ENCODE measurements at regions of chr1 and their contacts with region 1.

Region 1: DNA sequence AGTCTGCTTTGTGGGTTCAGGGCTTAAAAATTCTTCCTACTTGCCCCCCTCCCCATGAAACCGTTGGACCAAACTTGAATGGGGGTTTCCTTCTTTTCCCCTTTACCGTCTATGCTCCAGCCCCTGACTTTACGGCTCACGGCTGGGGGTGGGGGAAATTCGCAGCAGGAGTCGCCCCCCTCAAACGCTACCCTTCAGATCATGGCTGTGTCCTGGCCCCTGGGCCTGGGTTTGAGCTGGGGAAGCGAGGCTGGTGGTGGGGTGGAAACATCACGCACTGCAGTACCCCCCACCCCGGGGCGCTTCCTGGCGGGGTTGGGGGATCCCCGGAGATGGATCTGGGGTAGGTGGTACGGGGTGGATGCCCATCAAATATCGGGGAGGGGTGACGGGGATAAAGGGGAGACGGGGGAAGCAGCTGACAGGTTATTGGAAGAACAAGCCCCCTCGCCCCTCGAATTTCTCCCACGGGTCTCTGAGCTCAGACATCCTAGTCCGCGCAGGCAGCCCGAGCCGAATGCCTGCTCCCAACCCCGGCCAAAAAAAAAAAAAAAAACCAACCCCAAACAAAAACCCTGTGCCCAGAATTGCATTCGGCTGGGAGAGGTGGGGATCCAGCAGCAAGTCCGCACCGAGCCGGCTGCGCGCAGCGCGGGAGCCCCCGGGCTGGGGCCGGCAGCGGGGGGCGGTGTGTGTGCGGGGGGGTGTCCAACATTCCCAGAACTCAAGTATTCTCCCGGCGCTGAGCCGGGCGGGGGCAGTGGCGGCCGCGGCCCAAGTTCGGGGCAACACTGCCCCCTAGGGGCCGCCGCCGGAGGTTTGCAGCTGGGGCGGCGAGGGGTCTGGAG is 59.0 kb upstream of the ACOT11 start:
- DNase-seq: peak; percentile 68 to 91
- ATAC-seq: peak; percentile 79 to 92
- H3K4me3 ChIP-seq: peak overlapping the region; percentile 61
- H3K27ac ChIP-seq: peak overlapping the region; percentile 84 to 99
- H3K4me1 ChIP-seq: peaks cover 10% of the 10 kb centered on the region
- CTCF ChIP-seq: peak; percentile 88
- EP300 ChIP-seq: no peak
- POLR2A ChIP-seq: no peak
- RAD21 ChIP-seq: peak; percentile 75 to 96

Region 2: GRCh38 chr1:54070171-54070837 is 418.7 kb before region 1 on chr1:
- CTCF ChIA-PET with region 1: interaction called, 26 read pairs
- POLR2A ChIA-PET with region 1: no interaction called
- DNase-seq: peak; percentile 45 to 65
- ATAC-seq: peak; percentile 64 to 89; a peak in 4 of 6 replicates
- H3K4me3 ChIP-seq: no peak overlapping the region
- H3K27ac ChIP-seq: no peak overlapping the region
- H3K4me1 ChIP-seq: no peaks in the 10 kb centered on the region
- CTCF ChIP-seq: peak; percentile 90
- EP300 ChIP-seq: no peak
- POLR2A ChIP-seq: no peak
- RAD21 ChIP-seq: peak; percentile 81 to 84

Region 3: GRCh38 chr1:54114955-54115354 is 374.0 kb before region 1 on chr1:
- CTCF ChIA-PET with region 1: interaction called, 14 read pairs
- POLR2A ChIA-PET with region 1: no interaction called
- DNase-seq: no peak
- ATAC-seq: no peak
- H3K4me3 ChIP-seq: no peak overlapping the region
- H3K27ac ChIP-seq: no peak overlapping the region
- H3K4me1 ChIP-seq: peaks cover 19% of the 10 kb centered on the region
- CTCF ChIP-seq: no peak
- EP300 ChIP-seq: no peak
- POLR2A ChIP-seq: no peak
- RAD21 ChIP-seq: no peak

Region 4: GRCh38 chr1:54121482-54122134 is 367.4 kb before region 1 on chr1:
- CTCF ChIA-PET with region 1: interaction called, 36 read pairs
- POLR2A ChIA-PET with region 1: interaction called, 3 read pairs
- DNase-seq: peak; percentile 64 to 84
- ATAC-seq: peak; percentile 81 to 95
- H3K4me3 ChIP-seq: 0 out of 3 replicates have a peak overlapping the region, but pooled peaks have one; percentile 31
- H3K27ac ChIP-seq: peak overlapping the region; percentile 79 to 85
- H3K4me1 ChIP-seq: peaks cover 26% of the 10 kb centered on the region
- CTCF ChIP-seq: peak; percentile 62
- EP300 ChIP-seq: no peak
- POLR2A ChIP-seq: no peak
- RAD21 ChIP-seq: peak; percentile 64 to 75

Region 5: GRCh38 chr1:54139711-54140110 is 349.3 kb before region 1 on chr1:
- CTCF ChIA-PET with region 1: interaction called, 10 read pairs
- POLR2A ChIA-PET with region 1: no interaction called
- DNase-seq: no peak
- ATAC-seq: no peak
- H3K4me3 ChIP-seq: no peak overlapping the region
- H3K27ac ChIP-seq: no peak overlapping the region
- H3K4me1 ChIP-seq: 0 out of 3 replicates have a peak, but pooled peaks cover 3% of the 10 kb centered on the region
- CTCF ChIP-seq: no peak
- EP300 ChIP-seq: no peak
- POLR2A ChIP-seq: no peak
- RAD21 ChIP-seq: no peak

Region 6: DNA sequence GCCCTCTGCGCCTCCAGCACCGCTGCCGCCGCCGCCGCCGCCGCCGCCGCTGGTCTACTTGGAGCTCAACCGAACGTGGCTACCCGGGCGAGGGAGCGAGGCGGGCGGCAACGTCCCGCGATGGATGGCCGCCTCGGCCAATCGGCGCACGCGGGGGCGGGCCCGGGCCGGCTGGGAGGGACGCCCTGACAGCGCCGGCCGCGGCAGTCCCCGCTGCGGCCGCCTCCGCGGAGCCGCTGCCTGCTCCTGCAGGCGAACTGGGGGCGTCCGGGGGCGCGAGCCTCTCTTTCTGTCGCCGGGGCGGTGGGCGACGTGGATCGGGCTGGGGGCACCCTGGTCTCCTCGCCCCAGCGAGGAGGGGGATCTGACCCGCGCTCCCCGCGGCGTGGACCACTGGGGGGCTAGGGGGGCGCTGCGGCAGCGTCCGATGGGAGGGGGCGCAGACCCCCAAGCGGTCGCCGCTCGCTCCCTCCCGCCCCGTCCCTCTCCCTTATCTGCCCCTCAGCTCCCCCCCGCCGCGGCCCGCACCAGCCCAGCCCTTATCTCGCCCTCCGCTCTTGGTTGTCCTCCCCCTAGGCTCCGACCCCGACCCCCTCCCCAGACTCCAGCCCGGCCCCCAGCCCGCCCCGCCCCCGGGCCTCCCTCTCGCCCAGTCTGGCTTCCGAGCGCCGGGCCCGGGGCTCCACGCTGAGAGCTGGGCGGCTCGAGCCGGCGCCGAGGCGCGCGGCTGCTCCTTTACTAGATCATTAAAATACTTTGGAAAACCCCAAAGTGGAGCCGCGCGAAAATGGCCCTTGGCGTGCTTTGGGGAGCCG is 82.5 kb before region 1 on chr1 and contains the start of gene SSBP3:
- CTCF ChIA-PET with region 1: interaction called, 27 read pairs
- POLR2A ChIA-PET with region 1: interaction called, 17 read pairs
- DNase-seq: peak; percentile 80 to 89
- ATAC-seq: peak; percentile 92 to 94
- H3K4me3 ChIP-seq: peak within 1 kb of the TSS; percentile 94
- H3K27ac ChIP-seq: peak within 1 kb of the TSS; percentile 74 to 99
- H3K4me1 ChIP-seq: peaks cover 19% of the 10 kb centered on the region
- CTCF ChIP-seq: no peak
- EP300 ChIP-seq: no peak
- POLR2A ChIP-seq: no peak
- RAD21 ChIP-seq: no peak
- polyA plus RNA-seq, gene SSBP3: 6.6 and 7.2 TPM in 2 replicates

Region 7: GRCh38 chr1:54439550-54440223 is 49.3 kb before region 1 on chr1:
- CTCF ChIA-PET with region 1: no interaction called
- POLR2A ChIA-PET with region 1: no interaction called
- DNase-seq: no peak
- ATAC-seq: no peak
- H3K4me3 ChIP-seq: no peak overlapping the region
- H3K27ac ChIP-seq: no peak overlapping the region
- H3K4me1 ChIP-seq: no peaks in the 10 kb centered on the region
- CTCF ChIP-seq: no peak
- EP300 ChIP-seq: no peak
- POLR2A ChIP-seq: no peak
- RAD21 ChIP-seq: no peak

Region 8: GRCh38 chr1:54685335-54685905 is 196.4 kb after region 1 on chr1:
- CTCF ChIA-PET with region 1: no interaction called
- POLR2A ChIA-PET with region 1: no interaction called
- DNase-seq: no peak
- ATAC-seq: no peak
- H3K4me3 ChIP-seq: no peak overlapping the region
- H3K27ac ChIP-seq: no peak overlapping the region
- H3K4me1 ChIP-seq: no peaks in the 10 kb centered on the region
- CTCF ChIP-seq: no peak
- EP300 ChIP-seq: no peak
- POLR2A ChIP-seq: no peak
- RAD21 ChIP-seq: no peak

Measured in A549 (cell line).